Heart left ventricle (tissue), 16 donors: ENCODE measurements at regions of chrX and their contacts with region 1.

Region 1: GRCh38 chrX:140141444-140142029 is 176.2 kb upstream of the CXorf66 start:
- DNase-seq: no peak
- ATAC-seq: no peak
- H3K4me3 ChIP-seq: no peak overlapping the region
- H3K27ac ChIP-seq: no peak overlapping the region
- H3K4me1 ChIP-seq: no peaks in the 10 kb centered on the region
- H3K27me3 ChIP-seq: peaks cover 0 to 17% (median 0%) of the 10 kb centered on the region in 9 donors
- CTCF ChIP-seq: peak in 11 of 12 donors; percentile 36 to 73 (median 57)
- POLR2A ChIP-seq: no peak

Region 2: GRCh38 chrX:140050906-140051305 is 90.6 kb before region 1 on chrX:
- intact Hi-C with region 1: loop called in 4 of 10 experiments (anchors 5 kb)
- DNase-seq: no peak
- ATAC-seq: no peak
- H3K4me3 ChIP-seq: no peak overlapping the region
- H3K27ac ChIP-seq: no peak overlapping the region
- H3K4me1 ChIP-seq: no peaks in the 10 kb centered on the region
- H3K27me3 ChIP-seq: peaks cover 0 to 22% (median 0%) of the 10 kb centered on the region in 9 donors
- CTCF ChIP-seq: peak in 7 of 12 donors; percentile 7 to 26 (median 23)
- POLR2A ChIP-seq: no peak

Region 3: DNA sequence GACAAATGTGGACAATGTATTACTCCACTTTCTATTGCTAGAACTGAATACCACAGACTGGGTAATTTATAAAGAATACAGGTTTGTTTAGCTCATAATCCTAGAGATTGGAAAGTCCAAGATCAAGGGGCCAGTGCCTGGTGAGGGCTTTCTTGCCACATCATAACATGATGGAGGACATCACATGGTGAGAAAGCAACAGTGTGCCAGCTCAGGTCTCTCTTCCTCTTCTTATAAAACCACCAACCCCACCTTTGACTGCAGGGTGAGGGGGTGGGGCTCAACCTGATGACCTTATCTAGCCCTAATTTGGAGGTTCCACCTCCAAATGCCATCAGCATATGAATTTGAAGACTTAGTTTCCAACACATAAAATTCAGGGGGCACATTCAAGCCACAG is 70.5 kb before region 1 on chrX:
- intact Hi-C with region 1: loop called in 2 of 10 experiments (anchors 5 kb)
- DNase-seq: no peak
- ATAC-seq: no peak
- H3K4me3 ChIP-seq: no peak overlapping the region
- H3K27ac ChIP-seq: no peak overlapping the region
- H3K4me1 ChIP-seq: no peaks in the 10 kb centered on the region
- H3K27me3 ChIP-seq: no peaks in the 10 kb centered on the region
- CTCF ChIP-seq: no peak
- POLR2A ChIP-seq: no peak

Region 4: GRCh38 chrX:140190441-140191108 is 49.0 kb after region 1 on chrX:
- intact Hi-C with region 1: no loop called
- DNase-seq: no peak
- ATAC-seq: no peak
- H3K4me3 ChIP-seq: no peak overlapping the region
- H3K27ac ChIP-seq: no peak overlapping the region
- H3K4me1 ChIP-seq: no peaks in the 10 kb centered on the region
- H3K27me3 ChIP-seq: peaks cover 0 to 6% (median 0%) of the 10 kb centered on the region in 9 donors
- CTCF ChIP-seq: no peak
- POLR2A ChIP-seq: no peak

Region 5: GRCh38 chrX:140447150-140447720 is 305.7 kb after region 1 on chrX:
- intact Hi-C with region 1: no loop called
- DNase-seq: no peak
- ATAC-seq: no peak
- H3K4me3 ChIP-seq: no peak overlapping the region
- H3K27ac ChIP-seq: no peak overlapping the region
- H3K4me1 ChIP-seq: no peaks in the 10 kb centered on the region
- H3K27me3 ChIP-seq: peaks cover 0 to 4% (median 0%) of the 10 kb centered on the region in 9 donors
- CTCF ChIP-seq: no peak
- POLR2A ChIP-seq: no peak

Region 6: DNA sequence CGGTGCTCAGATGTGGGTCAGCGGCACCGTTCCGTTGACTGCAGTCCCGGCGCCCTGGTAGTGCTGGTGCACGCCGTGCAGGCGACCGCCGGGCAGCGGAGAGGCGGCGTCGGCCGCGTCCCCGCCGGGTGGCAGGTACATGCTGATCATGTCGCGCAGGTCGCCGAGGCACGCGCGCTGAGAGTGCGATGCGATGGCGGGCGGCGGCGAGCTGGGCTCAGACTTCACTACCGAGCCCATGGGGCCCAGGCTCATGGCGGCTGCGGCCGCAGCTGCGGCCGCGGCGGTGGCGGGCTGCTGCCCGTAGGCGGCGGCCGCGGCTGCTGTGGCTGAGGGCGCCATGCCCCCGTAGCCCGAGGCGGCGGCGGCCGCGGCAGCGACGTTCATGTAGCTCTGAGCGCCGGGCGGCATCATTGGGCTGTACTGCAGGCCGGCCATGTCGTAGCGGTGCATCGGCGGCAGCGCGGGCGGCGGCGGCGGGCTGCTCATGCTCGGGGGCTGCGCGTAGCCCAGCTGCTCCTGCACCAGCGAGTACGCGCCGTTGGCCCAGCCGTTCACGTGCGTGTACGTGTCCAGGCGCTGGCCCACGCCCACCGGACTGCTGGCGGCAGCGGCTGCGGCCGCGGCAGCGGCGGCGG is 362.3 kb after region 1 on chrX:
- intact Hi-C with region 1: no loop called
- DNase-seq: peak in 1 of 5 donors; percentile 15
- ATAC-seq: peak in 2 of 4 donors; percentile 67 to 73
- H3K4me3 ChIP-seq: peak overlapping the region in 9 of 12 donors; percentile 5 to 45 (median 36)
- H3K27ac ChIP-seq: no peak overlapping the region
- H3K4me1 ChIP-seq: peaks cover 0 to 36% (median 0%) of the 10 kb centered on the region in 12 donors
- H3K27me3 ChIP-seq: peaks cover 10 to 96% (median 55%) of the 10 kb centered on the region in 9 donors
- CTCF ChIP-seq: peak in 2 of 12 donors; percentile 5 to 15
- POLR2A ChIP-seq: no peak

Region 7: DNA sequence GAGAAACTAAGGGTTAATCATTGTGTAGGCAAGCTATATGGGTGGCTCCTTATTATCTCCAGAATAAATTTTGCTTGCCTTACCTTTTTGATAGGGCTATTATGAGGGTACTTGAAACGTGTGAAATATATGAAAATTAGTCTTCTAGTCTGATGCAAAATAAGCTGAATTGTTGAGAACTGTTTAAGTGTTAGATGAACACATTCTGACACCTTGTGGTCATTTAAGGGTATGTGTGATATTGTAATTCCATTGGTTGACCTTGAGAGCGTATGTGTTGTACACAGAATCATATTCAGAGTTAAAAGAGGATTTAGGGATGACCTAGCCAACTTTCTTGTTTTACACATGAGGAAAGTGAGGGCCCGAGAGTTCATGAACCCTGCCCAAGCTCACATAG is 523.4 kb after region 1 on chrX:
- intact Hi-C with region 1: loop called in 1 of 10 experiments (anchors 10 kb)
- DNase-seq: no peak
- ATAC-seq: no peak
- H3K4me3 ChIP-seq: no peak overlapping the region
- H3K27ac ChIP-seq: no peak overlapping the region
- H3K4me1 ChIP-seq: no peaks in the 10 kb centered on the region
- H3K27me3 ChIP-seq: peaks cover 0 to 10% (median 0%) of the 10 kb centered on the region in 9 donors
- CTCF ChIP-seq: peak in 9 of 12 donors; percentile 10 to 39 (median 23)
- POLR2A ChIP-seq: no peak